Posterior vena cava (tissue), 2 donors: ENCODE measurements at regions of chr16 and their contacts with region 1.

Region 1: DNA sequence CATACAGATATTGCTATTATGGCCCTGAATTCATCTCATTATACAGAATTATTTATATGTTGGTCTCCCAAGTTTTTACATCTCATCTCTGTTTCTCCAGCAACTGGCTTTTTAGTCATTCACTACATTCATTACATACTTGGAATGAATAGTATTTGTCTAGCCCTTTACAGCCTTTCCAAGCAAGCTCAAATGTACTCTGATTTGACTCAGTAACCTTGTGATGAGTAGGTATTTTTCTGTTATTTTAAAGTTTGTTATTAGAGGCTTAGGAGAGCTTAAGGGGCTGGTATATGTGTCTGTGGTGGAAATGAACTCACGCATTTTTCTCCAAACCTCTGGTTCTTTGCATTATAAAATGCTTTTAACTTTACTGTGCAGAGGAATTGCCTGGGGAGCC is 224.7 kb downstream of the SNX29 start:
- DNase-seq: no peak

Region 2: DNA sequence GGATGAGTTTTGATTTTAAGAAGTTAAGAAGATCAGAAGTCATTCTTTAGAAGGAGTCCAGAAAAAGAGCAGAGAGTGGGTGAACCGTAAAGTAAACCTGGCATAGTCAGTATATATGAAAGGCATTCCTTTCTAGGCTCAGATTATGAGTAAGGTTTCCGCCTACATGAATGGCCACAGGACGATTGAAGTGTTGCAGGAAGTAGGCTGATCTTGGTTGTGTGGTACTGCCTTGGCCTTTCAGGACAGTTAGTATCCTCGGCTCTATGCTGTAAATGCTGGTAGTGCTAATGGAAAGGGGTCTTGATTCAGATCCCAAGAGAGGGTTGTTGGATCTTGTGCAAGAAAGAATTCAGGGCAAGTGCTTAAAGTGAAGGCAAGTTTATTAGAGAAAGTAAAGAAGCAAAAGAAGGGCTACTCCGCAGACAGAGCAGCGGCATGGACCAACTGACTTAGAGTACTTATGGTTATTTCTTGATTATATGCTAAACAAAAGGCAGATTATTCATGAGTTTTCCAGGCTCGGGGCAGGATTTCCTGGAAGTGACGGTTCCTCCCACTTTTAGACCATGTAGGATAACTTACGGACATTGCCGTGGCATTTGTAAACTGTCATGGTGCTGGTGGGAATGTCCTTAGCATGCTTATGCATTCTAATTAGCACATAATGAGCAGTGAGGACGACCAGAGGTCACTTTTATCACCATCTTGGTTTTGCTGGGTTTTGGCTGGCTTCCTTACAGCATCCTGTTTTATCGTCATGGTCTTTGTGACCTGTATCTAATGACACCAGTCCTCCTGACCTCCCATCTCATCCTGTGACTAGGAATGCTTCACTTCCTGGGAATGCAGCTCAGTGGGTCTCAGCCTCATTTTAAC is 59.9 kb before region 1 on chr16:
- intact Hi-C with region 1: loop called in 1 of 2 experiments (anchors 2 kb)
- DNase-seq: peak; percentile 41

Region 3: DNA sequence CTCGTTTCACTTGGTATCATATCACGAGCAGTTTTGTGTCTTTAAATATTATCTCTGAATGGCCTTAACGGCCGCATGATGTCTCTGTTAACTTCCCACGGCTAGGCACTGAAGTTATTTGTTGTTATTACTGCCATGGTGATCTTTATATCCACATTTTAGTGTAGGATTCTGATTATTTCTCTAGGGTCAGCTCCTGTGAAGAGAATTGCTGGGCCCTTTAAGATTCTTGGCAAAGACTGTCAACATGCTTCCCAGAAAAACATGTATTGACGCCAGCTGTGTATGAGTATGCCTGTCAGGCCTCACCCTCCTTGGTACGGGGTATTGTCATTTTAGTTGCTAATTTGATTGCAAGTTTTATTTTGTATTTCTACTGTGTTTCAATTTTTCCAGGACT is 38.8 kb after region 1 on chr16:
- intact Hi-C with region 1: no loop called
- DNase-seq: no peak